ENCODE measurements at regions of chr1 and their contacts with region 1.

Region 1: GRCh38 chr1:101357444-101357986 is 120.7 kb downstream of the S1PR1 start:
- DNase-seq: peak; percentile 82
- CTCF ChIP-seq: peak; percentile 79

Region 2: GRCh38 chr1:101325144-101325543 is 32.4 kb before region 1 on chr1:
- CTCF ChIA-PET with region 1: interaction called, 26 read pairs
- POLR2A ChIA-PET with region 1: no interaction called
- DNase-seq: no peak
- CTCF ChIP-seq: no peak

Region 3: GRCh38 chr1:101371259-101371658 is 13.7 kb after region 1 on chr1:
- CTCF ChIA-PET with region 1: interaction called, 70 read pairs
- POLR2A ChIA-PET with region 1: no interaction called
- DNase-seq: peak; percentile 71
- CTCF ChIP-seq: no peak

Region 4: DNA sequence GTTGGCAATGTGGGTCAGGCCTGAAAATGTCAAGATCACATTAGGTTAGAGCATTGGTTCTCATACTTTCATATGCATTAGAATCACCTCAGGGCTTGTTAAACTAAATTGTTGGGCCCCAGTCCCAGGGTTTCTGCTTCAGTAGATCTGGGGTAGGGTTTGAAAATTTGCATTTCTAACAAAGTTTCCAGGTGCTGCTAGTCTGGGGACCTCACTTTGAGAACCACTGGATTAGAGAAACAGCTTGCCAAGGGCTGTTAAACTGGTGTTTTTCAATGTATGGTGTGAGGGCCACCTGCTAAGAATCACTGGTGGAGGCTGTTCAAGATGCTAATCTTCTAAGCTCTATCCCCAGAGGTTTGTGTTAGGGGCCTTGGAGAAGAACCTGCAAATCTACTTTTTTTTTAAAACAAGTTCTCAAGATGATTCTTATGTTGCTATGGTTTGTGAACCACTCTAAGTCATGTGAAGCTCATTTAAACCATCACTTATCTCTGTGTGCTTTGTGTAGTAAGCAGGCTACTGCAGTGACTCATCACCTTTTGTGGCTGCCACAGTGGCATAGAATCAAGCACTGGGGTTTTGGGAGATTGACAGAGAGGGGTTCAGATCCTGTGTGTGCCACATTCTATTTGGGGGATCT is 31.5 kb after region 1 on chr1:
- CTCF ChIA-PET with region 1: interaction called, 23 read pairs
- POLR2A ChIA-PET with region 1: no interaction called
- DNase-seq: peak; percentile 23
- CTCF ChIP-seq: no peak